Activated T-helper 2 cell treated with anti-CD3 and anti-CD28 coated beads, Interferon-gamma antibody, Interleukin-2, Interleukin-4, amounts not matched to agents 10 μg/mL and 5 μg/mL and 100 μg/mL, durations not matched to agents 14 hours and 24 hours and 36 hours (primary cell): ENCODE measurements at regions of chr2 and their contacts with region 1.

Region 1: DNA sequence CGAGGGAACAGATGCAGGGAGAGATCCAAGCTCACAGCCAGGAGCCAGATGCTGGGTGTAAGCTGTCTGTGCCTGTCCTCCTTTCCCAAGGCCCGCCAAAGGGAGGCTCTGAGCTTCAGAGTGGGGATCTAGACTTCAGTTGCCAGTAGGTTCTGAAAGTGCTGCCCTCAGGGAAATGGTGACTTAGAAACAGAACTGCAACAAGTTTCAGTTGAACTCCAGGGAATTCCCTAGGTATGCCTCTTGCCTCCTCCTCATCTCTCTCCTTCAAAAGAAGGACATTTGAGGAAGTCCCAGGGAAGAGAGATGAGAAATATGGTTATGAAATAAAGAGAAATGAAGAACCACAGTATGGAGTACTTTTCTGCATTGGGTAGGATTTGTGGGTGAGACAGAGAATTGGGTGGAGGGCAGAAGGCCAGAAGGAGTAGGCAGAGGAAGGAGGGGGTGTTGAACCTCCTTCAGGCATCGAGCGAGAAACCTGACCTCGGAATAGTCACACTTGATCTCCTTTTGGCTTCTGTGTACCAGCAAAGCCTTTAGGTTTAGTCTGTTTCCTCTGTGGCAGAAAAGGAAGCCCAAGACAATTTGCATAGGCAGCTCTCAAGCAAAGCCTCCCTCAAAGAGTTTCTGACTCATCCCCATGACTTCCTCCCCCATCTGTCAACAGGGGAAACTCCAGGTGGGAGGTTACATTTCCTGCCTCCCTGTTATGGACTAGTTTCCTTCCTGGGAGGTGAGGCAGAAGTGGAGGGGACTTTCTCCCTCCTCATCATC is 45.7 kb downstream of the QPCT start:
- DNase-seq: peak; percentile 59
- H3K4me3 Mint-ChIP-seq: peak overlapping the region; percentile 7
- H3K27ac Mint-ChIP-seq: peak overlapping the region; percentile 79
- H3K4me1 Mint-ChIP-seq: peaks cover 20% of the 10 kb centered on the region
- H3K27me3 Mint-ChIP-seq: peaks cover 10% of the 10 kb centered on the region

Region 2: GRCh38 chr2:37324786-37325624 is 65.2 kb before region 1 on chr2 and contains the start of gene PRKD3:
- intact Hi-C with region 1: loop called (anchors 2 kb)
- DNase-seq: peak; percentile 34
- H3K4me3 Mint-ChIP-seq: peak within 1 kb of the TSS; percentile 94
- H3K27ac Mint-ChIP-seq: peak within 1 kb of the TSS; percentile 90
- H3K4me1 Mint-ChIP-seq: peaks cover 33% of the 10 kb centered on the region
- H3K27me3 Mint-ChIP-seq: peaks cover 51% of the 10 kb centered on the region
- total RNA-seq, gene PRKD3: 11.9 and 14.0 TPM in 2 replicates

Region 3: DNA sequence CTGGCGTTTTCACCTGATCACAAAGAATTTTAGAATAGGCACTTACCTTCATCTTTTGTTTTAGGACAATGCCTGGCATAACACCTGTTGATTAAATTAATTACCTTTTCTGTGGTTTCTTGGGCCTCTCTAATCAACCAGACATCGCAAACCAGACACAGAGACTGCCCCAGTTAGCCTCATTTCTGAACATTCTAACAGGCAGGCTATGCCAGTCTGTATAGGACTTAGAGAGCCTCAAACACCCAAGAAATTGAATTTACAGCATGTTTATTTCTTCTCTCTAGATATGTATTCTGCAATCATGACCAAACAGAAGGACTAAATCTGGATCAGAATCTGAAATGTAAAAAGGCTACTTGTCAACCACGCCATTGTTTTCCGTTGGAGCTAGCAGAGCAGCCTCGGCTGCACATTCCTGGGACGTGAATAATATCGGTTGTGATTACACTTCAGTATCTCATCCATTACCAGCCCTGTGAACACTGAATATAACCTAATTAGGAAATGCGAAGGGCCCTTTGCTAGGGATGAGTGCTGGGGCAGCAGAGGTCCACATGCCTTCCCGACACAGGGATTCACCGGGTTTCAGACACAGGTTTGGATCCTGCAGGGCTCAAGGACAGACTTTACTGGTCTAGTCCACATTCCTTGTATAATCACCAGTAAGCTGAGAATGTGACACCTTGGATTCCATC is 298.7 kb after region 1 on chr2:
- intact Hi-C with region 1: loop called (anchors 10 kb)
- DNase-seq: no peak
- H3K4me3 Mint-ChIP-seq: no peak overlapping the region
- H3K27ac Mint-ChIP-seq: no peak overlapping the region
- H3K4me1 Mint-ChIP-seq: peaks cover 14% of the 10 kb centered on the region
- H3K27me3 Mint-ChIP-seq: peaks cover 12% of the 10 kb centered on the region

Region 4: DNA sequence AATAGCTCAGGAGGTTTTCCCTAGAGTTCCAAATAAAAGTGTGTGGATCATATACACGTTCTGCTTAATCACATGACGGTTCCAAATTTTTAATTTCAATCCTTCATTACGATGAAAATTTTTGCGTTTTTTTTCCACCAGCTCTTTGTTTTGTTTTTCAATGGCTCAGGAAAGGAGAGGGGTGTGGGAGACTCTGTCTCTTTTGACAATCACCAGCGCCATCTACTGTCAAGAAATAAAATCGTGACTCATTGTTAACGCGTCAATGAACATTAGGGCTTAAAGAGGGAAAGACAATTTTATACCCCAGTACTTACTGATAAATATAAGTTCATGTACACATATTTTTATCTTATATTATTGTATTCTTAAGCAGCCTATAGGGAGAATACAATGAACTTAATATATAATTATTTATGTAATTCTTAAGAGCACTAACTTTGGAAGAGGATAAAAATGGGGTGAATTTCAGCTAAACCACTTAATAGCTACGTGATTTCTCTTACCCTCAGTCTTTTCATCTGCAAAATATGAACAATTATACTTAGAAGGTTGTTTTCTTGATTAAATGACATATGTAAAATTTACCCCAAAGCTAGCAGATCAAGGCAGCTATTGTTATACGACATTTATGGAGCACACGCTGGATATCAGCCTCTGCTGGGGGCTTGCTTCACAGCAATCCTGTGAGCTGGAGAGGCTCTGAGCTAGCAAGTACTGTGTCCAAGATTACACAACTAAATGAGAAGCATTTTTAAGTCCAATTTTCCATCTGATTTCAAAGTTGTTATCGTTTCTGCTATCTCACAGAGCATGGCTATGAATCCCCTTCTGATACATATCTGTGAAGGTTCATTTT is 487.5 kb after region 1 on chr2:
- intact Hi-C with region 1: loop called (anchors 1 kb)
- DNase-seq: no peak
- H3K4me3 Mint-ChIP-seq: no peak overlapping the region
- H3K27ac Mint-ChIP-seq: no peak overlapping the region
- H3K4me1 Mint-ChIP-seq: peaks cover 11% of the 10 kb centered on the region
- H3K27me3 Mint-ChIP-seq: peaks cover 23% of the 10 kb centered on the region

Region 5: GRCh38 chr2:38264396-38265281 is 874.5 kb after region 1 on chr2:
- intact Hi-C with region 1: loop called (anchors 5 kb)
- DNase-seq: no peak
- H3K4me3 Mint-ChIP-seq: no peak overlapping the region
- H3K27ac Mint-ChIP-seq: peak overlapping the region; percentile 33
- H3K4me1 Mint-ChIP-seq: peaks cover 39% of the 10 kb centered on the region
- H3K27me3 Mint-ChIP-seq: no peaks in the 10 kb centered on the region